ENCODE measurements at regions of chr2 and their contacts with region 1.

Region 1: DNA sequence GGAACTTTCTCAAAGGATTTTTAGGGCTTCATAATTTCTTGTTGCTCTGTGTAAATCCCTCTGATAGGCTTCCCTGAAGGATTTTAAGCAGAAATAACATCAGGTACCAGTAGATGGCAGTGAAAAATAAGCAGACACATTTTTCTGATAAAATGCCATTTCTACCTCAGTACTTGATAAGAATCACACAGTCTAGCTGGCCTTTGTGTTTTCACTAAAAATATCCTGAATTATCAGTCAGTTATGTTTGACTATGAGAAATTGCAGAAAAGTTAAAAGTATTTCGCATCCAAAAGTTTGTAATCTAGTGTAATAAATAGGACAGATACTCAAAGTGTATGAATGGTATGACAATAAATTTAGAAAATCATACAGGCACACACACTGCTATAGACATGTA is 68.7 kb downstream of the DNAJC10 start:
- DNase-seq: no peak
- ATAC-seq: no peak
- H3K4me3 ChIP-seq: no peak overlapping the region
- H3K27ac ChIP-seq: no peak overlapping the region
- H3K4me1 ChIP-seq: peaks cover 0 to 6% (median 0%) of the 10 kb centered on the region in 9 donors
- H3K27me3 ChIP-seq: no peaks in the 10 kb centered on the region
- CTCF ChIP-seq: peak; percentile 14 to 73 (median 54)

Region 2: DNA sequence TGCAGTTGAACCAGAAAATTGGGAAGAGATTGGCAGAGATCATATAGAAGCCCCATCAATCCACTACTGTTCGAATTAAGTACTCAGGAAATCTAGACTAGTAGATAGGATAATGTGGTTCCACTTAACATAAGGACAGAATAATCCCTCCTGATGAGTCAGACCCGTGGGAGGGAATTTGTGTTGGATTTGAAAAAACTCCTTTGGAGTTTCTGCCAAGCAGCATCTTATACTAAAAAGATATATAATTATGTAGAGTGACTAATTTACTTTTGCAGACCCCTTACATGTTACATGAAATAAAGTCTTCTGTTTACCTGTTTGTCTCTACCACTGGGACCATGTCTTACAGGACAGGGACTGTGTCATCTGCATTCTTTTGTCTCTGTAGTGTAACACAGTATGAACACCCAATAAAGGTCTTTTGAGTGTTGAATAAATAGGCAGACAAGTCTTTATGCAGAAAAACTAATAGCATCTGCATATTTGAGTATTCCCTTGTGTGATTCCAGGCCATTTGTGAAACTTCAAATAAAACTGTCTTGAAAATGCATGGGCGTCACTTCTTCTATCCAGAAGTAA is 191.3 kb before region 1 on chr2:
- intact Hi-C with region 1: no loop called
- DNase-seq: no peak
- ATAC-seq: no peak
- H3K4me3 ChIP-seq: no peak overlapping the region
- H3K27ac ChIP-seq: no peak overlapping the region
- H3K4me1 ChIP-seq: peaks cover 0 to 8% (median 0%) of the 10 kb centered on the region in 9 donors
- H3K27me3 ChIP-seq: no peaks in the 10 kb centered on the region
- CTCF ChIP-seq: no peak

Region 3: GRCh38 chr2:182655750-182656149 is 129.0 kb before region 1 on chr2:
- intact Hi-C with region 1: no loop called
- DNase-seq: no peak
- ATAC-seq: no peak
- H3K4me3 ChIP-seq: no peak overlapping the region
- H3K27ac ChIP-seq: no peak overlapping the region
- H3K4me1 ChIP-seq: peaks cover 0 to 4% (median 0%) of the 10 kb centered on the region in 9 donors
- H3K27me3 ChIP-seq: peaks cover 0 to 4% (median 0%) of the 10 kb centered on the region in 7 donors
- CTCF ChIP-seq: no peak

Region 4: GRCh38 chr2:182907081-182907830 is 122.5 kb after region 1 on chr2:
- intact Hi-C with region 1: loop called in 2 of 10 experiments (anchors 10 kb)
- DNase-seq: no peak
- ATAC-seq: peak in 1 of 8 donors; percentile 35
- H3K4me3 ChIP-seq: no peak overlapping the region
- H3K27ac ChIP-seq: peak overlapping the region in 1 of 10 donors; percentile 13
- H3K4me1 ChIP-seq: no peaks in the 10 kb centered on the region
- H3K27me3 ChIP-seq: no peaks in the 10 kb centered on the region
- CTCF ChIP-seq: no peak

Region 5: DNA sequence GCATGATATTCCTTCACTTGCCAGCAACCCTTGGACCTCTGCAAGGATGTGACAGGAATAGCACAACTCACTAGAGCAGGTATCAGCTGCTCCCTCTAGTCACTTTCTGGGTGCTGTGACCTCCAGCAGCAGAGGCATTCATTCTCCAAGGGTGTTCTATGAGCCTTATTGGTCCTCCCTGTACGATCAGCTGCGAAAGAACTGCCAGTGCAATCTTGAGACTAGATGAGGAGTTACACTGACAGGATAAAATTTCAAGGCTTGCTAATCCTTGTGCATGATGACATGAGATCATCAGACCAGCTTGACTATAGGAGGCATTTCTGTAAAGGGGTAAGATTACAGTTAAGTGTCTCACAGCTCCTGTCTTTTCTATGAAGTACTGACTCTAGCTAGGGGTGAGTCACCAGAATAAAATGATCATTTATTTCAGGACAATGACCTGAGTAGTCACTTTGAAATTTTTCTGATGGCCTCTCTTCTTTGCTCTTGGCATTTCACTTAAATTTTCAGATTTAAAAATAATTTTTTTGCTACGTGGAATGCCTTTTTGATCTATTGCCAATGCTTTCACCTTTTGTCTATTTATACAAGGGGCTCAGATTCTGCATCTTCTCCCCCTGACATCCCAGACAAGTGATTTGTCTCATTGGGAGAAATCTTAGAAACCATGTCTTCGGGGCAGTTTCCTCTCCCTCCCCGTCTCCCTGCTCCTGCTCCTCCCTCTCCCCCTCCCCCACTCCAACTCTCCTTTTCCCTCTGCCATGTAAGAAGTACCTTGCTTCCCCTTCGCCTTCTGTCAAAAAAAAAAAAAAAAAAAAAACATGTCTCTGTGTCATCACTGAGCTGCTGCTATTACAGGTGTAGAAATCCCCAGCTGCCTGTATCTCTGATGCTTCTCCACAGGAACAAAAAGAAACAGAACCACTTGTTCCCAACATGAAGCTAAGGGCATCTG is 130.9 kb after region 1 on chr2:
- intact Hi-C with region 1: loop called in 1 of 10 experiments (anchors 10 kb)
- DNase-seq: no peak
- ATAC-seq: peak; percentile 34 to 81 (median 70)
- H3K4me3 ChIP-seq: no peak overlapping the region
- H3K27ac ChIP-seq: peak overlapping the region in 4 of 10 donors; percentile 13 to 27 (median 22)
- H3K4me1 ChIP-seq: peaks cover 0 to 12% (median 0%) of the 10 kb centered on the region in 9 donors
- H3K27me3 ChIP-seq: no peaks in the 10 kb centered on the region
- CTCF ChIP-seq: no peak

Measured in heart right ventricle (tissue), 16 donors.